OCI-LY7 (cell line): ENCODE measurements at regions of chr1 and their contacts with region 1.

Region 1: GRCh38 chr1:51506537-51506936 is 12.5 kb downstream of the EPS15 start:
- DNase-seq: peak; percentile 32
- H3K4me3 ChIP-seq: peak overlapping the region; percentile 6
- H3K27ac ChIP-seq: peak overlapping the region; percentile 12
- H3K4me1 ChIP-seq: peaks cover 54% of the 10 kb centered on the region
- CTCF ChIP-seq: no peak

Region 2: GRCh38 chr1:51491166-51491981 is 15.2 kb before region 1 on chr1:
- CTCF ChIA-PET with region 1: no interaction called
- POLR2A ChIA-PET with region 1: interaction called, 11 read pairs
- intact Hi-C with region 1: no loop called
- DNase-seq: peak; percentile 51
- H3K4me3 ChIP-seq: peak overlapping the region; percentile 48
- H3K27ac ChIP-seq: peak overlapping the region; percentile 59
- H3K4me1 ChIP-seq: peaks cover 59% of the 10 kb centered on the region
- CTCF ChIP-seq: no peak

Region 3: GRCh38 chr1:51535006-51535592 is 28.6 kb after region 1 on chr1:
- CTCF ChIA-PET with region 1: no interaction called
- POLR2A ChIA-PET with region 1: no interaction called
- intact Hi-C with region 1: no loop called
- DNase-seq: peak; percentile 56
- H3K4me3 ChIP-seq: no peak overlapping the region
- H3K27ac ChIP-seq: no peak overlapping the region
- H3K4me1 ChIP-seq: no peaks in the 10 kb centered on the region
- CTCF ChIP-seq: peak; percentile 94